ENCODE measurements at regions of chr17 and their contacts with region 1.

Region 1: GRCh38 chr17:58364270-58364942 is 12.4 kb upstream of the SUPT4H1 start:
- DNase-seq: no peak
- ATAC-seq: no peak
- H3K4me3 Mint-ChIP-seq: no peak overlapping the region
- H3K27ac Mint-ChIP-seq: no peak overlapping the region
- H3K4me1 Mint-ChIP-seq: peaks cover 15% of the 10 kb centered on the region
- H3K27me3 Mint-ChIP-seq: no peaks in the 10 kb centered on the region
- CTCF ChIP-seq: no peak

Region 2: GRCh38 chr17:58352014-58352842 is 12.2 kb before region 1 on chr17 and contains the start of gene SUPT4H1:
- CTCF ChIA-PET with region 1: no interaction called
- POLR2A ChIA-PET with region 1: interaction called, 50 read pairs
- intact Hi-C with region 1: loop called (anchors 2 kb)
- DNase-seq: peak; percentile 91
- ATAC-seq: peak; percentile 92
- H3K4me3 Mint-ChIP-seq: peak within 1 kb of the TSS; percentile 100
- H3K27ac Mint-ChIP-seq: peak within 1 kb of the TSS; percentile 97
- H3K4me1 Mint-ChIP-seq: peaks cover 49% of the 10 kb centered on the region
- H3K27me3 Mint-ChIP-seq: no peaks in the 10 kb centered on the region
- CTCF ChIP-seq: no peak
- total RNA-seq, gene SUPT4H1: 90.2 and 100 TPM in 2 replicates

Measured in activated B cell treated with CpG ODN at 0.5 μM for 24 hours (primary cell).